GM13976 (cell line): ENCODE measurements at regions of chr1 and their contacts with region 1.

Region 1: DNA sequence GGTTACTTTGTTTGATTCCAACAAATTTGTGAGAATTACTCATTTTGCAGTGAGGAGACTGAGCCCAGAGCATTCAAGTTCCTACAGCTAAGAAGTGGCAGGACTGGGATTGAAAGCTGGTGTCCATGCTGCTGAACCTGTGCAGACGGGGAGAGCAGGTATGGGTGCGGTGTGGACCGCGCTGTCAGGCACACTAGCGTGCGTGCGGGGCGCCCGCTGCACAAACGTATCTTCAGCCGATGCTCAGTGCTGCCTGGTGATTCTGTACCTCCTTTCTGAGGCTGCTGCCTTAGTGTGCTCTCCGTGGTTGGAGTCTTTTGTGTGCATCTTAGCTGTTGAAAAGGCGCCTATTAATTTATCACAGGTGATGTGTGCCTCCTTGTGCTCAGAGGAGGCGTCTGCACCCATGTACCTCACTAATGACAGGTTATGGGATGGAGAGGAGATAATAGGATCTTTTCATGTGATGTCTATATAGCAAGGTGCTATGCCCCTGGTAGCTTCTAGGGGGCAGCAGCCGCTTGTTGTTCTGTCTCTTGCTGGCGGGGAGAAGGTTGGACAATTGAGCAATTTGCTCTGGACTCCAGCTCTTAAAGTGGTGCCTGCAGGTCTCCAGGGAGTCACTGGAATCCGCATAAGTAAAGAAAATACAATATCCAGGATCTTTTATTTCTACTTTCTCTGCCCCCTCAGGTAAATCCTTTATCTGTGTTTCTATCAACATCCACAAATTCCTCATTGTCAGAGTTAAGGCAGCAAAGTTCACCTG is 32.5 kb downstream of the PEX14 start:
- DNase-seq: peak; percentile 81
- CTCF ChIP-seq: peak; percentile 63

Region 2: GRCh38 chr1:10867138-10867721 is 359.9 kb after region 1 on chr1:
- in situ Hi-C with region 1: loop called (anchors 25 kb)
- DNase-seq: peak; percentile 87
- CTCF ChIP-seq: peak; percentile 69

Region 3: GRCh38 chr1:10941891-10942541 is 434.7 kb after region 1 on chr1:
- in situ Hi-C with region 1: loop called (anchors 25 kb)
- DNase-seq: peak; percentile 87
- CTCF ChIP-seq: peak; percentile 90